Cardiac septum (tissue), 1 donor: ENCODE measurements at regions of chr2 and their contacts with region 1.

Region 1: DNA sequence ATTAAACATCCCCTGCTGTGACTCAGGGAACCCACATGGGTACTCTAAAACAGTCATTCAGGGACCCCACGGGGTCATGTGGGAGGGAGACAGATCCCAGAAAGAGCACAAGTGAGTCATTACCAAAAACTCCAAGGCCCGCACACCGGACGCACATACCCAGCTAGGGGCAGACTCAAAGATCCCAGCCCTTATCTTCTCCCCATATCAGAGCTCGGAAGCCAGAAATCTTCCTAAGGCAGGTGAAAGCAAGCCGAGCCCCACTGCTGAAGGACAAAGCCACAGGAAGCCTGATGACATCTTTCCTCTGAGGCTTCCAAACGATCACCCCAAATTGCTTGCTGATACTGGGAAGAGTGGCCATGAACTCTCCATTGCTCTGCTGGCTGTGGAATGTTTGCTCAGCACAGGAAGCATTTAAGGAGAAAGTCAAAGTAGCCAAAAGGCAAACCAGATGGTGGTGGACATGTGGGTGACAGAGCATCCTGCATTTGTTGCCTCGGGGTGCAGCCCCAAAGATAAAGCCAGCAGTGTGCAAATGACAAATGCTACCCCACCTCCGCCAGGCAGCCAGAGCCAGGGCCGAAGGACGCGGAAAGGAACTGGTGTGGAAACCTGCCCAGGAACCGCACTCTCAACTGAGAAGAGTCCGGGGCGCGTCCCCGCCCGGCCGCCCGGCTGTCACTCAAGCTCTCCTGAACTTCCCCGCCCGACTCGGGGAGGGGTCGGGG is 784 bp downstream of the ACTR1B start:
- DNase-seq: peak; percentile 91

Region 2: DNA sequence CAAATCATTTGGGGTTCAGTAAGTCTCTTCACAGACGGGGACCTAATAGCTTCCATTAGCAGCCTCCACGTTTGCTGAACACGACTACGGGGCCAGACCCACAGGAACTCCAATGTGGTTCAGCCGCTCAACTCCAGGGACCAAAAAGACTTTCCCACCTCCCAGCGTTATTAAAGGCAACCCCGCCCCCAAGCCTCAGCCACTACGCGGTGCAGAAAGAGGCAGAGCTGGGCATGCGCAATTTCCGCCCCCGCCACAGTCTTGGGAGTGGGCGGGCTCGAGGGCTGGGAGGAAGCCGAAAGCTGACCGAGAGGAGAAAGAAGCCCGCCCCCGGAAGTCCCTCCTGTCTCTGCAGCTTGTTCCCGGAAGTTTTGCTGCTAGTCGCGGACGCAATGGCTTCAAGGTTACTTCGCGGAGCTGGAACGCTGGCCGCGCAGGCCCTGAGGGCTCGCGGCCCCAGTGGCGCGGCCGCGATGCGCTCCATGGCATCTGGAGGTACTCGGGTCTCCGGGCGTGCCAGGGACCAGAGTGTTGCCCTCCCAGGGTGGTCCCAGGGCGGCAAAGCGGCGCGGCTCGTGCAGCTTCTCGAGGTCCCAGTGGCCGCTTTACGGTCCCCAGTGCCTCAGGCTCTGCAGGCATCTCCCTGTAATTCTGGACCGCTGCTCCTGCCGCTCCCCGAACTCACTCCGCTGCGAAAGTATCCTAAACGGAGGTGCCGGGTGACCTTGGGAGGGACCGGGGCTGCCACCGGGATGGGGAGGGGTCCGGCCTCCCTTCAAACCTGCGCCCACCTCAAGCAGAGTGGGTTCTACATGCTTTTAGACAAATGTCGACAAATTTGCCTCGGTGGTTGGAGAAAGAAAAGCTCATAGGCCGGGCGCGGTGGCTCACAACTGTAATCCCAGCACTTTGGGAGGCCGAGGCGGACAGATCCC is 17.1 kb before region 1 on chr2 and contains the start of gene COX5B:
- intact Hi-C with region 1: loop called (anchors 1 kb)
- DNase-seq: peak; percentile 100
- total RNA-seq, gene COX5B: 992 TPM